Activated CD8-positive, alpha-beta T cell treated with anti-CD3 and anti-CD28 coated beads for 36 hours (primary cell): ENCODE measurements at regions of chr7 and their contacts with region 1.

Region 1: DNA sequence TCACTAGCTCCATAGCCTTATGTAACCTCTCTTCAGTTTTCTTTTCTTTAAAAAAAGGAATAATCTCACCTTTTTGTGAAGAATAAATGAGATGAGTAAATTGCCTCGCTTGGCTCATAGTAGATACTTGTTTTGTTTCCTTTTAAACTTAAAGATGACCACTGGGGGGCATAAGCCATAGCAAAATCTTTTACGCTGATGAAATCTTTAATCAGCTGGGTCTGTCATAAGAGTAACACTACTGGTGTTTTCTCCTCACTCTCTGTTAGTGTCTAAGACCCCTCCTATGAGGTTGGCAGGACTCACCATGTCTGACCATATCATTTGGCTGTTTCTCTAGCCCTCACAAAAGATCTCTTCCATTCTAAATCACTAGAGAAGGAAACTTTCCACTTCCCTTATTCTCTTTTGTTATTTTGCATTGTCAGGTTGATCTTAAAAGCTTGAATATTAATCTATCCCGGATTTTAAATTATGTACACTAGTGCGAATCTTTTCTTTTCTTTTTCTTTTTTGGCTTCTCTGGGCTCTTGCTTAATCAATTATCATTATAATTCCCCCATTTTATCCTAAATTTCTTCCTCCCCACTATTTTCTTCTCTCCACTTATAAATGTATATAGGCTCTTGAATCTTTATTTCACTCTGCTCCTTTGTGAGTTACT is 12.5 kb downstream of the STAG3 start:
- DNase-seq: no peak
- ATAC-seq: peak; percentile 90
- H3K4me3 Mint-ChIP-seq: no peak overlapping the region
- H3K27ac Mint-ChIP-seq: peak overlapping the region; percentile 80
- H3K4me1 Mint-ChIP-seq: peaks cover 31% of the 10 kb centered on the region
- H3K27me3 Mint-ChIP-seq: no peaks in the 10 kb centered on the region
- CTCF ChIP-seq: peak; percentile 70

Region 2: DNA sequence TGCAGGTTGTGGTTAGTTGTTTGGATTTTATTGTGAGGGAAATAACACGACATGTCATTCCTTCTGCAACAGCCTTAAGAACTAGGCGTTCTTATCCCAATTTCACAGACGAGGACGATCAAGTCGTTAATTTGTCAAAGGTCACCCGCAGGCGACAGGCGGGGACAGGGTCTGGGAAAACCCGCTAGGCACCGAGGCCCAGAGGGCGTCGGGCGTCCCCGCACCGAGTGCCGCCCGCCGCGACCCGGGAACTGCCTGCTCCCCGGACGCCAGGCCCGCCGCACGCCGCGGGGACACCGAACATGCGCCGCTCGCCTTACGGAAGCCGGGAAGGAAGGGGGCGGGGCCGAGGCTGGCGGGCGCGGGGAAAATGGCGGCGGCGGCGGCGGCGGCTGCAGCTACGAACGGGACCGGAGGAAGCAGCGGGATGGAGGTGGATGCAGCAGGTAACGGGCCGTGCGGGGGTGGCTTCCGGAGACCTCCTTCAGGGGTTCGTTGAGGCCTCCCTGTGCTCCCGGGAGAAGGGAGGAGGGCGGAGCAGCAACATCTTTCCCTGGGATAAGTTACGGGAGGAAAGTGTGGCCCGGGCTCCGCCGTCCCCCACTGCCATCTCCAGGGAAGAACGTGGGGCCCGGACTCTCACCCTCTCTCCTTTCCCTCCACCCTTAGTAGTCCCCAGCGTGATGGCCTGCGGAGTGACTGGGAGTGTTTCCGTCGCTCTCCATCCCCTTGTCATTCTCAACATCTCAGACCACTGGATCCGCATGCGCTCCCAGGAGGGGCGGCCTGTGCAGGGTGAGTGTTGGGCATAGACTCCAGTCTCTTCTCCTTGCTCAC is 101.3 kb before region 1 on chr7 and contains the start of gene COPS6:
- CTCF ChIA-PET with region 1: no interaction called
- POLR2A ChIA-PET with region 1: no interaction called
- intact Hi-C with region 1: no loop called
- DNase-seq: peak; percentile 88
- ATAC-seq: peak; percentile 72
- H3K4me3 Mint-ChIP-seq: peak within 1 kb of the TSS; percentile 95
- H3K27ac Mint-ChIP-seq: peak within 1 kb of the TSS; percentile 97
- H3K4me1 Mint-ChIP-seq: peaks cover 25% of the 10 kb centered on the region
- H3K27me3 Mint-ChIP-seq: no peaks in the 10 kb centered on the region
- CTCF ChIP-seq: no peak
- total RNA-seq, gene COPS6: 81.3 to 86.3 TPM

Region 3: GRCh38 chr7:100167921-100168323 is 22.3 kb before region 1 on chr7:
- CTCF ChIA-PET with region 1: interaction called, 17 read pairs
- POLR2A ChIA-PET with region 1: no interaction called
- intact Hi-C with region 1: no loop called
- DNase-seq: no peak
- ATAC-seq: no peak
- H3K4me3 Mint-ChIP-seq: peak overlapping the region; percentile 74
- H3K27ac Mint-ChIP-seq: peak overlapping the region; percentile 80
- H3K4me1 Mint-ChIP-seq: peaks cover 74% of the 10 kb centered on the region
- H3K27me3 Mint-ChIP-seq: peaks cover 10% of the 10 kb centered on the region
- CTCF ChIP-seq: no peak

Region 4: DNA sequence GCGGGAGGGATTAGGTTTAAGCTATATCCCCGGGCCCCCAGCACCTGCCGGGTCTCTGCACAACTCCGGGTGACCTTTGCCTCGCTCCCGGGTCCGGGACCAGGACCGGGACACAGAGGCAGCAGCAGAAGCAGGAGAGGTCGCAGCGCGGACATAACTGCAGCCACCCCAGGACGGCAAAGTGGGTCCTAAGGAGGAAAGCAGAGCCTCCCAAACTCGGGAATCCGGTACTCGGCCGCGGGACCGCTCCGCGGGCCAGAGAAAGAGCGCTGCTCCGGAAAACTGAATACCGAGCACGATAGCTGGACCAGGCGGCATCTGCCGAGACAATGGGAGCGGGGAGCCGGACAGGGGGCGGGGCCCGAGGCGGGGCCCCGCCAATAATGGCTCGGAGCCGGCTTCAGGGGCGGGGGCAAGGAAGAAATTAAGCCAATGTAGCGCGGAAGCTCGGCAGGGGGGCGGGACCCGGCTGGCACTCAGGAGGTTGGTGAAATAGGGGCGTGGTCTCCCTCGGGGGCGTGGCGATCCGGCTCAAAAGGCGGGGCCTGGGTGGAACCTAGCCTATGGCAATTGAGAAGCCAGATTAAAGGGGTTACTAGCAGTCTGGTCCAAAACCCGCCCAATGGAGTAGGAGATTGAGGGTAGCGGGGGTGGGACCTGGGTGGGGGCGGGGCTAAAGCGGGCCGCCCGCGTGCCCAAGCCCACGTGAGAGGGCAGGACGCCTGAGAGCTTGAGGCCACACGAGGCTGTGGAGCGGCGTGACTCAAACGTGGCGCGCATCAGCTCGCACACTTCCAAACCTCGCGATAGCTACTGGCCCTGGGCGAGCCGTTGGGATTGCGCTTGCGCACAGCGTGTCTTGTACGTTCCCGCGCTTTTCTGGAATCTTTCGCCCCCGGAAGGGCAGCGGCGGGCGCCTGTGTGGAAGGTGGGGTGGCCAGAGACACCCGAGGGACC is 12.9 kb before region 1 on chr7 and contains the starts of genes GPC2 and STAG3:
- CTCF ChIA-PET with region 1: interaction called, 17 read pairs
- POLR2A ChIA-PET with region 1: interaction called, 11 read pairs
- intact Hi-C with region 1: no loop called
- DNase-seq: peak; percentile 99
- ATAC-seq: peak; percentile 91
- H3K4me3 Mint-ChIP-seq: peak within 1 kb of the TSS; percentile 76
- H3K27ac Mint-ChIP-seq: peak within 1 kb of the TSS; percentile 25
- H3K4me1 Mint-ChIP-seq: peaks cover 32% of the 10 kb centered on the region
- H3K27me3 Mint-ChIP-seq: no peaks in the 10 kb centered on the region
- CTCF ChIP-seq: no peak
- total RNA-seq, gene GPC2: 3.7 to 4.3 TPM
- total RNA-seq, gene STAG3: 13.2 to 15.8 TPM

Region 5: GRCh38 chr7:100200693-100201092 is 10.5 kb after region 1 on chr7:
- CTCF ChIA-PET with region 1: interaction called, 33 read pairs
- POLR2A ChIA-PET with region 1: interaction called, 4 read pairs
- intact Hi-C with region 1: no loop called
- DNase-seq: no peak
- ATAC-seq: no peak
- H3K4me3 Mint-ChIP-seq: no peak overlapping the region
- H3K27ac Mint-ChIP-seq: no peak overlapping the region
- H3K4me1 Mint-ChIP-seq: peaks cover 10% of the 10 kb centered on the region
- H3K27me3 Mint-ChIP-seq: no peaks in the 10 kb centered on the region
- CTCF ChIP-seq: no peak

Region 6: GRCh38 chr7:100208911-100209408 is 18.8 kb after region 1 on chr7:
- CTCF ChIA-PET with region 1: interaction called, 46 read pairs
- POLR2A ChIA-PET with region 1: interaction called, 5 read pairs
- intact Hi-C with region 1: no loop called
- DNase-seq: peak; percentile 85
- ATAC-seq: peak; percentile 83
- H3K4me3 Mint-ChIP-seq: no peak overlapping the region
- H3K27ac Mint-ChIP-seq: peak overlapping the region; percentile 76
- H3K4me1 Mint-ChIP-seq: peaks cover 46% of the 10 kb centered on the region
- H3K27me3 Mint-ChIP-seq: no peaks in the 10 kb centered on the region
- CTCF ChIP-seq: no peak

Region 7: DNA sequence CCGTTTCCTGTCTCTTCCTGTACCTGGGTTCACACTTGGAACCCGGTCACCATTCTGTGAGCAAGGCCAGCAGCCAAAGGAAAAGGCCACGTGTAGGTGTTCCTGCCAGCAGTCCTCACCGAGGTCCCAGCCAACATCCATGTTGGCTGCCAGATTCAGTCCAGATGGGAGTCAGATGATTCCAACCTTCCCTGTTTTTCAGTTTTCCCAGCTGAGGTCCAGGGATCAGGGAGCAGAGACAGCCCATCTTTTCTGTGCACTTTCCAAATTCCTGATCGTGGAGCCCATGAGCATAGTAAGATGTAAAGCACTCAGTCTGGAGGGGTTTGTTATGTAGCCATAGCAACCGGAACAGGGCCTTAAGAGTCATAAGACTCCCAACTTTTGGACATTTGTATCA is 25.7 kb after region 1 on chr7:
- CTCF ChIA-PET with region 1: interaction called, 46 read pairs
- POLR2A ChIA-PET with region 1: interaction called, 3 read pairs
- intact Hi-C with region 1: no loop called
- DNase-seq: no peak
- ATAC-seq: no peak
- H3K4me3 Mint-ChIP-seq: no peak overlapping the region
- H3K27ac Mint-ChIP-seq: peak overlapping the region; percentile 44
- H3K4me1 Mint-ChIP-seq: peaks cover 57% of the 10 kb centered on the region
- H3K27me3 Mint-ChIP-seq: no peaks in the 10 kb centered on the region
- CTCF ChIP-seq: no peak